B cell (primary cell): ENCODE measurements at regions of chr6 and their contacts with region 1.

Region 1: DNA sequence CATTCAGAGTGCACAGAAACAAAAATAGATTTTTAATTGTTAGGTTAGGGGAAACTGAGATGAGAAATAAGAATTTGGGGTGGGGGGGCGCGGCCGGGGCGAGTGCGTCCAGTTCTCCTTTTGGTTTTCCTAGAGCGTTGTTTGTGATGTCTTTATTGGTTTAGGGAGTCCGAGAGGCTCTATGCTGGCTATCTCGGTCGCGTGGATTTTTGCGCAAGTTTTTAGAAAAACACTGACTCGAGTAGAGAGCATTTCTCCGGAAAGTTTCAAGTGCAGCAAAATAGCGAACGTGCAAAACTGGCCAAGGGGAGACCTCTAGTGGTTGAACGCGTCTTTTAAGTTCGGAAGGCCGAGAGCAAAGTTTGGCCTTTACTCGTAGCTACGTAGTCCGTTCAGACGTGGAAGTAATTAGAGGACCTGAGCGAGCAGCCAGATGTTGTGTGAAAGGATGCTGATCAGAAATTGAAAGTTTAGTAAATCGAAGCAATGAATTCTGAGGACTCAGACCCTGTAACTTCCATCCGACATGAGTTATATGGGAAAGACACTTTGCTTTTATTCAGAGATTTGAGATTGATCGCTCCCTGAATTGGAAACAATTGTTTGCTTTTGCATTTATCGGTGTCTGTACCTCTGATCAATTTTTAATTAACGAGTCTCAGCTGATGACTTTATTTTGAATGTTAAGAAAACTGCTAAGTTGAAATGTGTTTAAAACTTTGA is 2.7 kb downstream of the L3MBTL3 start:
- DNase-seq: peak; percentile 91
- ATAC-seq: peak; percentile 59
- H3K4me3 ChIP-seq: peak overlapping the region; percentile 70 to 77 (median 73)
- H3K4me3 Mint-ChIP-seq: peak overlapping the region; percentile 99
- H3K27ac ChIP-seq: peak overlapping the region; percentile 59 to 82
- H3K27ac Mint-ChIP-seq: peak overlapping the region; percentile 99
- H3K4me1 ChIP-seq: peaks cover 10% of the 10 kb centered on the region in 2 donors
- H3K4me1 Mint-ChIP-seq: peaks cover 29% of the 10 kb centered on the region
- H3K27me3 ChIP-seq: no peaks in the 10 kb centered on the region
- H3K27me3 Mint-ChIP-seq: no peaks in the 10 kb centered on the region
- CTCF ChIP-seq: peak; percentile 81

Region 2: DNA sequence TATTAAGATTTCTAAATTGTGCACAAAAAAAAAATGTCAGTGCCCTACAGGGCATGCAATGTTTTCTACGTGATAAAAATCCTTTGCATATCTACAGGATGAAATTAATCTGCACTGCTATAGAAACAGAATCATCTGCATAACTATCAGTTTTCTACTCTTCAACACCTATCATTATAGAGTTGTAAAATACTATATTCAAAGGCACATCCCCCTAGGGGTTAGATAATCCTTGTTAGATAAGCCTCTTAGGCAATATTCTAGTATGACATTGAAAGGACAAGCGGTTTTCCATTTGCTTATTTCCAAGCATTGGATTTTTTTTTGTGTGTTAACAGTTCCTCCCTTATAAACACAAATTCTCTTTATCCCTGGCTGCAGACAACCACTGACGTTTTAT is 1236.8 kb before region 1 on chr6:
- CTCF ChIA-PET with region 1: no interaction called
- POLR2A ChIA-PET with region 1: no interaction called
- intact Hi-C with region 1: no loop called
- DNase-seq: no peak
- ATAC-seq: no peak
- H3K4me3 ChIP-seq: no peak overlapping the region
- H3K4me3 Mint-ChIP-seq: no peak overlapping the region
- H3K27ac ChIP-seq: no peak overlapping the region
- H3K27ac Mint-ChIP-seq: no peak overlapping the region
- H3K4me1 ChIP-seq: no peaks in the 10 kb centered on the region
- H3K4me1 Mint-ChIP-seq: no peaks in the 10 kb centered on the region
- H3K27me3 ChIP-seq: no peaks in the 10 kb centered on the region
- H3K27me3 Mint-ChIP-seq: no peaks in the 10 kb centered on the region
- CTCF ChIP-seq: no peak

Region 3: DNA sequence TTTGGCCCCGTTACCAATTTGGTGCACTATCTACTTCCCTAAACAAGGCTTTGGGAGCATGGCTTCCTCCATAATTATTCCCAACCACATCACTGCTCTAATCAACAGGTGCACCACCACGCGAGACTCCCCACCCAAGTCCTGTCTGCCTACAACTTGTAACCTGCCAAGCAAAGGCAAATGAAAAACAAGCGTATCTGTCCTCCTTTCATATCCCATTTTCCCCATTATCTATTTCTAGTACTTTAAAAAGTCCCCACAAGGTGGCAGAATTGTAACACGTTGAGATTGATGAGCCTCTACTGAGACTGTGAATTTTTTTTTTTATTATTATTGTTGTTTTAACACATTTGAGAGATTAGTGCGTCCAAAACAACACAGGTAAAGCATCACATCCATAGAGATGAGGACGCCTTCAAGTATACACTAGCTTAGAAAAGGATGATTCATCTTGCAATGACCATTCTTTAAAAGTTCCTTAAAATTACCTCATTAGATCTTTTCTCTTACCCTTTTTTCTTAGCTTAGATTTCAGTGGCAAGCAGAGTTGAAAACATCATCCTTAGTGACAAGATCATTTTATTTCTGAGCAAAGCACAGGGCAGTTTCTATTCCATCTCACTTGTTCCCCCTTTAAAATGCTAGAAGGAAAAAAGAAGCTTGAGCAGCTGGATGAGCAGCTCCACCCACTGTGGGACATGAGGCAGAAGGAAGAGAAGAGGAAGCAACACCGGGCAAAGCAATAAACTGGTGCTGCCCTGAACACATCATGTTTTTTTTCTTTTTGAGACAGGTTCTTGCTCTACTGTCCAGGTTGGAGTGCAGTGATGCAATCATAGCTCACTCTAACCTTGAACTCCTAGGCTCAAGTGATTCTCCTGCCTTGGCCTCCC is 521.9 kb before region 1 on chr6:
- CTCF ChIA-PET with region 1: interaction called, 12 read pairs
- POLR2A ChIA-PET with region 1: no interaction called
- intact Hi-C with region 1: loop called (anchors 1 kb)
- DNase-seq: peak; percentile 73
- ATAC-seq: peak; percentile 78
- H3K4me3 ChIP-seq: no peak overlapping the region
- H3K4me3 Mint-ChIP-seq: peak overlapping the region; percentile 31
- H3K27ac ChIP-seq: peak overlapping the region in 1 of 2 donors; percentile 9
- H3K27ac Mint-ChIP-seq: no peak overlapping the region
- H3K4me1 ChIP-seq: peaks cover 9 to 10% of the 10 kb centered on the region in 2 donors
- H3K4me1 Mint-ChIP-seq: peaks cover 9% of the 10 kb centered on the region
- H3K27me3 ChIP-seq: no peaks in the 10 kb centered on the region
- H3K27me3 Mint-ChIP-seq: peaks cover 2% of the 10 kb centered on the region
- CTCF ChIP-seq: peak; percentile 79

Region 4: GRCh38 chr6:129730477-129731165 is 290.4 kb before region 1 on chr6:
- CTCF ChIA-PET with region 1: interaction called, 28 read pairs
- POLR2A ChIA-PET with region 1: no interaction called
- intact Hi-C with region 1: loop called (anchors 1 kb)
- DNase-seq: peak; percentile 65
- ATAC-seq: peak; percentile 24
- H3K4me3 ChIP-seq: no peak overlapping the region
- H3K4me3 Mint-ChIP-seq: no peak overlapping the region
- H3K27ac ChIP-seq: no peak overlapping the region
- H3K27ac Mint-ChIP-seq: no peak overlapping the region
- H3K4me1 ChIP-seq: peaks cover 0 to 4% of the 10 kb centered on the region in 2 donors
- H3K4me1 Mint-ChIP-seq: no peaks in the 10 kb centered on the region
- H3K27me3 ChIP-seq: no peaks in the 10 kb centered on the region
- H3K27me3 Mint-ChIP-seq: no peaks in the 10 kb centered on the region
- CTCF ChIP-seq: peak; percentile 78

Region 5: GRCh38 chr6:129774697-129775447 is 246.2 kb before region 1 on chr6:
- CTCF ChIA-PET with region 1: interaction called, 4 read pairs
- POLR2A ChIA-PET with region 1: no interaction called
- intact Hi-C with region 1: loop called (anchors 1 kb)
- DNase-seq: peak; percentile 43
- ATAC-seq: peak; percentile 49
- H3K4me3 ChIP-seq: no peak overlapping the region
- H3K4me3 Mint-ChIP-seq: no peak overlapping the region
- H3K27ac ChIP-seq: no peak overlapping the region
- H3K27ac Mint-ChIP-seq: no peak overlapping the region
- H3K4me1 ChIP-seq: no peaks in the 10 kb centered on the region
- H3K4me1 Mint-ChIP-seq: peaks cover 3% of the 10 kb centered on the region
- H3K27me3 ChIP-seq: no peaks in the 10 kb centered on the region
- H3K27me3 Mint-ChIP-seq: peaks cover 19% of the 10 kb centered on the region
- CTCF ChIP-seq: peak; percentile 72

Region 6: DNA sequence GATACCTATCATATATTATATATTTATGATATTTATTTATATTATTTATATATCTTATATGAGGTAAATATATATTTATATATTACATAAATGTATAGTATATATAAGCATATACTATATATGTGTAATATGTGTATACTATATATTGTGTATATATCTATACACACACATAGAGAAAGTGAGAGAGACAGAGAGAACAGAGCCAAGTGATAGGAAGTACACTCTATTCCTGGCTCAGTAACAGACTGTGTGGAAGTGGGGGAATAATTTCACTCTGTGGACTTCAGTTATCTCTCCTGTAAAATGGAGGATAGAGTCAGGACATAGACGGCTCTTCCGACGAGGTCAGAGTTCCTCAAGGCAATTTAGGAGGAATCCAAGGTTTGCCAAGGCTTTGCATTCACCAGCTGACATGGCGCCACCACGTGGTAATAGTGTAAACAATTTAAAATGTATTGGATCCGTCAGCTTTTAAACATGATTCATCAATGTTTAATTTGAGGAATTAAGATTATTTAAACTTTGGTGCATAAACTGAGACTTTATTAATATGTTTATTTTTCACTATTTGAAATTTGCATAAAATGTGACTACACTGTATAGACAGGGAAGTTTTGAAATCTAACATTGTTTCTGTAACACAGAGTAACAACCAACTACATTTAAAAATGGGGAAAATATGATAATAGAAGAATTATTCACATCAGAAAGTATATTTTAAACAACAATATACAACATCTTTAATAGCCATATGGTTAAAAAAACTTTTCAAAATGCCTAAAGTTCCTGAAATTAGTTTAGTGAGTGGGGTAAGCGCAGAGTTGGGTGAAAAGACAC is 84.5 kb before region 1 on chr6:
- CTCF ChIA-PET with region 1: interaction called, 16 read pairs
- POLR2A ChIA-PET with region 1: no interaction called
- intact Hi-C with region 1: loop called (anchors 1 kb)
- DNase-seq: peak; percentile 66
- ATAC-seq: no peak
- H3K4me3 ChIP-seq: no peak overlapping the region
- H3K4me3 Mint-ChIP-seq: peak overlapping the region; percentile 62
- H3K27ac ChIP-seq: no peak overlapping the region
- H3K27ac Mint-ChIP-seq: no peak overlapping the region
- H3K4me1 ChIP-seq: peaks cover 0 to 3% of the 10 kb centered on the region in 2 donors
- H3K4me1 Mint-ChIP-seq: peaks cover 3% of the 10 kb centered on the region
- H3K27me3 ChIP-seq: peaks cover 0 to 7% (median 3%) of the 10 kb centered on the region in 4 experiments
- H3K27me3 Mint-ChIP-seq: peaks cover 19% of the 10 kb centered on the region
- CTCF ChIP-seq: peak; percentile 86

Region 7: GRCh38 chr6:129981598-129981997 is 39.5 kb before region 1 on chr6:
- CTCF ChIA-PET with region 1: no interaction called
- POLR2A ChIA-PET with region 1: no interaction called
- intact Hi-C with region 1: no loop called
- DNase-seq: no peak
- ATAC-seq: no peak
- H3K4me3 ChIP-seq: no peak overlapping the region
- H3K4me3 Mint-ChIP-seq: no peak overlapping the region
- H3K27ac ChIP-seq: no peak overlapping the region
- H3K27ac Mint-ChIP-seq: no peak overlapping the region
- H3K4me1 ChIP-seq: no peaks in the 10 kb centered on the region
- H3K4me1 Mint-ChIP-seq: no peaks in the 10 kb centered on the region
- H3K27me3 ChIP-seq: no peaks in the 10 kb centered on the region
- H3K27me3 Mint-ChIP-seq: peaks cover 11% of the 10 kb centered on the region
- CTCF ChIP-seq: no peak

Region 8: DNA sequence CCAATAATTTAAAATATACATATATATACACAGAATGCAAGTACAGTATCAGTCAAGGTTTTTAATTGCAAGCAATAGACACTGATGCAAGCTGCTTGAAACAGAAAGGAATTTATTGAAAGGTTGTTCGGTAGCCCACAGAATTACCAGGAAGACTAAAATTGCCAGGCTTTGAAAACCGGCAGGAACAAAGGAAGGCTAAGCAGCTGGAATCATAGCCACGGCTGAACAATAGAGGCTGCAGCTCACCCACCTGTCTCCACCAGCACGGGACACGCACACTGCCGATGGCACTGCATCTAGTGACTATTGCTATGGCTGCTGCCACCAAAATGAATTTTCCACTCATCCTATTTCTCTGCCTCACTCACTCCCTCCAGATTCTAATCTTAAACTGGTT is 24.7 kb before region 1 on chr6:
- CTCF ChIA-PET with region 1: no interaction called
- POLR2A ChIA-PET with region 1: no interaction called
- intact Hi-C with region 1: no loop called
- DNase-seq: no peak
- ATAC-seq: no peak
- H3K4me3 ChIP-seq: no peak overlapping the region
- H3K4me3 Mint-ChIP-seq: no peak overlapping the region
- H3K27ac ChIP-seq: no peak overlapping the region
- H3K27ac Mint-ChIP-seq: no peak overlapping the region
- H3K4me1 ChIP-seq: no peaks in the 10 kb centered on the region
- H3K4me1 Mint-ChIP-seq: no peaks in the 10 kb centered on the region
- H3K27me3 ChIP-seq: no peaks in the 10 kb centered on the region
- H3K27me3 Mint-ChIP-seq: peaks cover 21% of the 10 kb centered on the region
- CTCF ChIP-seq: no peak

Region 9: DNA sequence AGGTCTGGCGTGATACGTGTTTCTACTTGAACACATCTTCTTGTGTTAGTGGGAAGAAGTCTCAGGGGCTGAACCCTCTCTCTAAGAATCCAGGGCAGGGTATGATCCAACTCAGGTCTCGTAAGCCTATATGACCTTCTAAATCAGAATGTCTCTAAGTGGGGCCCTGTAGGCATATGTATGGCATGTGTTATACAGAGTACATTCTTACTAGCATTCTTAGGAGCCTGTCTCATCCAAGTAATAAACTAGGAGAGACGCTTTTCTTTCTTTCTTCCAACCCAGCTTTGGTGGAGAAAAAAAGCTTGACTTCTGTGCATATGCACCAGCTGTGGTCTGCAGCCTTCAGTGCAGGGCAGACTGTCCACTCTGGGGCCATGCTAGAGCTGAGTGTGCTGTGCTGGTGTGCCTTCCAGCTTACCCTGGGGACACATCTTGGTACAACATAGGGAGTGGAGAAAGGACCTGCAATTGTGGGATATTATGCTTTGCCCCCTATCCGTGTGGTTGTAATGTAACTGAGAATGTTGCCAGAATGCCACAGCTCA is 44.6 kb after region 1 on chr6:
- CTCF ChIA-PET with region 1: no interaction called
- POLR2A ChIA-PET with region 1: no interaction called
- intact Hi-C with region 1: no loop called
- DNase-seq: no peak
- ATAC-seq: no peak
- H3K4me3 ChIP-seq: no peak overlapping the region
- H3K4me3 Mint-ChIP-seq: no peak overlapping the region
- H3K27ac ChIP-seq: no peak overlapping the region
- H3K27ac Mint-ChIP-seq: no peak overlapping the region
- H3K4me1 ChIP-seq: no peaks in the 10 kb centered on the region
- H3K4me1 Mint-ChIP-seq: no peaks in the 10 kb centered on the region
- H3K27me3 ChIP-seq: no peaks in the 10 kb centered on the region
- H3K27me3 Mint-ChIP-seq: no peaks in the 10 kb centered on the region
- CTCF ChIP-seq: no peak

Region 10: DNA sequence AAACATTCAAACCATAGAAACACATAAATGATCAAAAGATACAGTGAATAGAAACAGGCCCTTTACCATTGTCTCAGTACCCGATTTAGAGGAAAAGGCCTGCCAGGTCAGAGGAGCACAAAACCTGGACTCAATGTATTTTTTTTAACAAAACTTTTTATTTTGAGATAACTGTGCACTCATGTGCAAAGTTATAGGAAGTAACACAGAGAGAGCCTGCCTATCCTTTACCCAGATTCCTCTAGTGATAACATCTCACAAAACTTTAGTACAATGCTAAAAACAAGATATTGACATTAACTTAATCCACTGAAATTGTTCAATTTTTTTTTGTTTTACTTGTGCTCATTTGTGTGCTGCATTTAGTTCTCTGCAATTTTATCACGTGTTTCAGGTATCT is 238.5 kb after region 1 on chr6:
- CTCF ChIA-PET with region 1: no interaction called
- POLR2A ChIA-PET with region 1: no interaction called
- intact Hi-C with region 1: loop called (anchors 5 kb)
- DNase-seq: no peak
- ATAC-seq: peak; percentile 59
- H3K4me3 ChIP-seq: peak overlapping the region in 1 of 5 experiments; percentile 8
- H3K4me3 Mint-ChIP-seq: peak overlapping the region; percentile 88
- H3K27ac ChIP-seq: peak overlapping the region; percentile 80 to 81
- H3K27ac Mint-ChIP-seq: peak overlapping the region; percentile 94
- H3K4me1 ChIP-seq: peaks cover 23 to 28% of the 10 kb centered on the region in 2 donors
- H3K4me1 Mint-ChIP-seq: peaks cover 40% of the 10 kb centered on the region
- H3K27me3 ChIP-seq: no peaks in the 10 kb centered on the region
- H3K27me3 Mint-ChIP-seq: no peaks in the 10 kb centered on the region
- CTCF ChIP-seq: no peak